Posterior cingulate gyrus (tissue), 11 donors: ENCODE measurements at regions of chr2 and their contacts with region 1.

Region 1: GRCh38 chr2:27489498-27490397 is at the start of gene IFT172:
- DNase-seq: peak; percentile 96 to 100 (median 99)

Region 2: GRCh38 chr2:27520316-27520715 is 30.6 kb after region 1 on chr2:
- intact Hi-C with region 1: no loop called
- DNase-seq: no peak

Region 3: DNA sequence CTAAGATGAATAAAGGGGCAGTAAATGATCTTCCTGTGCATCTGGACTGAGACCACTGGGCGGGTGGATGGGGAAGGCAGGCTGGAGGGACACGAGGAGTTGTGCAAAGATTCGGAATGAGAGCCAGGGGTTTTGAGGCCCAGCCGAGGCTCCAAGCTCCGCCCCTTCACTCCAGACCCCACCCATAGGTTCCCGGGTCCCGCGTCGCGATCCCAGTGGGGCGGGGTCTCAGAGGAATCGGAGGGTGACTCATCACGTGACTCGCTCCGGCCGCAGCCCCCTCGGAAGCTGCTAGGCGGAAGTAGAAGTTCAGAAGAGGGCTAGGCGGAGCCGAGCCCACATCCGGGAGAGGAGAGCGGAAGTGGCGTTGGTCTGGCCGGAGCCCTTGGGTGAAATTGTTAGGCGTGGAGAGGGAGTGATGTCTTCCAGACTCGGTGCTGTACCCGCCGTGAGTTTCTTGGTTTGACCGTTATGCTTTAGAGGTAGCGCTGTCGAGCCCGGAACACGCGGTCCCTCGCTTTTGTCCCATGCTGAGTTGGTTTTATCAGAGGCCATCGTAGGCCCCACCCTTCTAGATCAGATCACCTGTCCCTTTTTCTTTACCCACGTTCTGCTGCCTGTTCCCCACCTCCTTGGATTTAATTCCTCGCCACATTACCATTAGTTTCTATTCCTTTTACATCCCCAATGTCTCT is 93.1 kb after region 1 on chr2 and contains the start of gene ZNF512:
- intact Hi-C with region 1: loop called (anchors 2 kb)
- DNase-seq: peak; percentile 71 to 98 (median 84)

Region 4: GRCh38 chr2:27638037-27638637 is 148.4 kb after region 1 on chr2:
- intact Hi-C with region 1: loop called (anchors 10 kb)
- DNase-seq: no peak